ENCODE measurements at regions of chr19 and their contacts with region 1.

Region 1: GRCh38 chr19:15418588-15419412 is at the start of gene AKAP8L:
- DNase-seq: peak; percentile 94
- ATAC-seq: peak; percentile 92
- H3K4me3 Mint-ChIP-seq: peak within 1 kb of the TSS; percentile 99
- H3K27ac Mint-ChIP-seq: peak within 1 kb of the TSS; percentile 99
- H3K4me1 Mint-ChIP-seq: peaks cover 42% of the 10 kb centered on the region
- H3K27me3 Mint-ChIP-seq: no peaks in the 10 kb centered on the region
- CTCF ChIP-seq: no peak
- total RNA-seq, gene AKAP8L: 126 and 163 TPM in 2 replicates

Region 2: GRCh38 chr19:15125232-15126067 is 293.4 kb before region 1 on chr19:
- CTCF ChIA-PET with region 1: no interaction called
- POLR2A ChIA-PET with region 1: interaction called, 3 read pairs
- intact Hi-C with region 1: loop called (anchors 1 kb)
- DNase-seq: peak; percentile 96
- ATAC-seq: peak; percentile 88
- H3K4me3 Mint-ChIP-seq: peak overlapping the region; percentile 95
- H3K27ac Mint-ChIP-seq: peak overlapping the region; percentile 91
- H3K4me1 Mint-ChIP-seq: peaks cover 17% of the 10 kb centered on the region
- H3K27me3 Mint-ChIP-seq: peaks cover 4% of the 10 kb centered on the region
- CTCF ChIP-seq: no peak

Region 3: GRCh38 chr19:15264061-15264932 is 154.5 kb before region 1 on chr19:
- CTCF ChIA-PET with region 1: interaction called, 5 read pairs
- POLR2A ChIA-PET with region 1: interaction called, 3 read pairs
- intact Hi-C with region 1: loop called (anchors 1 kb)
- DNase-seq: peak; percentile 72
- ATAC-seq: peak; percentile 76
- H3K4me3 Mint-ChIP-seq: no peak overlapping the region
- H3K27ac Mint-ChIP-seq: no peak overlapping the region
- H3K4me1 Mint-ChIP-seq: peaks cover 9% of the 10 kb centered on the region
- H3K27me3 Mint-ChIP-seq: no peaks in the 10 kb centered on the region
- CTCF ChIP-seq: peak; percentile 36

Region 4: DNA sequence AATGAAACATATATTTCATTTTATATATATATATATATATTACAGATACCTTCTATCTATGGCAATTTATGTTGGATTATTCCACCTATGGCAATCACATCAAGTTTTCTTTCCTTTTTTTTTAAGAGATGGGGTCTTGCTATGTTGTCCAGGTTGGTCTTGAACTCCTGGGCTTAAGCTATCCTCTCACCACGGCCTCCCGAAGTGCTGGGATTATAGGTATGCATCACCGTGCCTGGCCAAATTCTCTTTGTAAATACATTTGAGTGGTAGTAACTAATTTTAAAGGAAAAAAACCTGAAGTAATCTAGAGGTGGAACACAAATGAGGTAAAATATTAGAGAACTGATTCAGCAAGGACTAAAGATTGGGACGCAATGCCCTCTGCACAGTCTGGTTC is 64.9 kb before region 1 on chr19:
- CTCF ChIA-PET with region 1: no interaction called
- POLR2A ChIA-PET with region 1: no interaction called
- intact Hi-C with region 1: no loop called
- DNase-seq: no peak
- ATAC-seq: no peak
- H3K4me3 Mint-ChIP-seq: no peak overlapping the region
- H3K27ac Mint-ChIP-seq: no peak overlapping the region
- H3K4me1 Mint-ChIP-seq: peaks cover 3% of the 10 kb centered on the region
- H3K27me3 Mint-ChIP-seq: no peaks in the 10 kb centered on the region
- CTCF ChIP-seq: no peak

Region 5: DNA sequence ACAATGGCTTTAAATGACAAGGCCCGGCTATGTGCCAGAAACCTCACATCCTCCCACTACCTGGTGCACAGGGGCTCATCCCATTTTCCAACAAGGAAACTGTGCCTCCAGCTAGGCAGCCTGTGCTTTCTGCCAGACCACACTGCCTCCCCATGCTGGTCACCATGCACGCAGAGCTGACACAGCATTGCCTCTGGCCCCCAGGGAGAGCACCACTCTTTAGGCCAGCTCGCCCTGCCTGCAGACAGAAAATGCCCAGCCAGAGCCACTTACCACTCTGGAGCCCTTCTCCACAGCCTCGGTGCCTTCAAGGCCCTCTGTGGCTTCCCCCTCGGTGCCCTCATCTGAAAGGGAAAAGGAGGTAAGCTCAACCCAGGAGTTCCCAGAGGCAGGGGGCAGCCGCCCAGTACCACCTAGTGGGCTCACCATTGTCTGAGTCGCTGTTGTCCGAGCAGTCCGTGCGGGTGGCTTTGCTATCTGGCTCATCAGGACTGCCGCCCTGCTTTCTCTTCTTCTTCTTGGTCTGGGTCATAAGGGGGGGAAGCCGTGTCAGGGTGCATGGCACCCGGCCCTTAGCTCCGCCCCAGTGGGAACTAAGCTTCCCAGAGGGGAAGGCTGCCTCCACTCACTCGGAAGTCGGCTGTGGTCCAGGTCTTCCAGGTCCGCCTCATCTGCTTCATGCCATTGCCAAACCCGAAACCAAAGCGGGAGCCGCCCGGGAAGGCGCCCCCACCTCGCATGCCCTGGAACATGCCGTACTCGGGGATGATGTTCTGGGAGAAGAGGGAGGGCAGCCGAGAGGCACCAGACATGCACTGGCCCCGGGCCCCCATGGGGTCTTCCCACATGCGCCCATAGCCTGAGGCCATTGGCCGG is 18.0 kb before region 1 on chr19:
- CTCF ChIA-PET with region 1: no interaction called
- POLR2A ChIA-PET with region 1: no interaction called
- intact Hi-C with region 1: no loop called
- DNase-seq: no peak
- ATAC-seq: no peak
- H3K4me3 Mint-ChIP-seq: no peak overlapping the region
- H3K27ac Mint-ChIP-seq: no peak overlapping the region
- H3K4me1 Mint-ChIP-seq: peaks cover 18% of the 10 kb centered on the region
- H3K27me3 Mint-ChIP-seq: no peaks in the 10 kb centered on the region
- CTCF ChIP-seq: no peak

Region 6: GRCh38 chr19:15432629-15433518 is 14.1 kb after region 1 on chr19:
- CTCF ChIA-PET with region 1: interaction called, 14 read pairs
- POLR2A ChIA-PET with region 1: interaction called, 53 read pairs
- intact Hi-C with region 1: loop called (anchors 1 kb)
- DNase-seq: peak; percentile 92
- ATAC-seq: peak; percentile 89
- H3K4me3 Mint-ChIP-seq: peak overlapping the region; percentile 97
- H3K27ac Mint-ChIP-seq: peak overlapping the region; percentile 93
- H3K4me1 Mint-ChIP-seq: peaks cover 31% of the 10 kb centered on the region
- H3K27me3 Mint-ChIP-seq: no peaks in the 10 kb centered on the region
- CTCF ChIP-seq: no peak

Region 7: DNA sequence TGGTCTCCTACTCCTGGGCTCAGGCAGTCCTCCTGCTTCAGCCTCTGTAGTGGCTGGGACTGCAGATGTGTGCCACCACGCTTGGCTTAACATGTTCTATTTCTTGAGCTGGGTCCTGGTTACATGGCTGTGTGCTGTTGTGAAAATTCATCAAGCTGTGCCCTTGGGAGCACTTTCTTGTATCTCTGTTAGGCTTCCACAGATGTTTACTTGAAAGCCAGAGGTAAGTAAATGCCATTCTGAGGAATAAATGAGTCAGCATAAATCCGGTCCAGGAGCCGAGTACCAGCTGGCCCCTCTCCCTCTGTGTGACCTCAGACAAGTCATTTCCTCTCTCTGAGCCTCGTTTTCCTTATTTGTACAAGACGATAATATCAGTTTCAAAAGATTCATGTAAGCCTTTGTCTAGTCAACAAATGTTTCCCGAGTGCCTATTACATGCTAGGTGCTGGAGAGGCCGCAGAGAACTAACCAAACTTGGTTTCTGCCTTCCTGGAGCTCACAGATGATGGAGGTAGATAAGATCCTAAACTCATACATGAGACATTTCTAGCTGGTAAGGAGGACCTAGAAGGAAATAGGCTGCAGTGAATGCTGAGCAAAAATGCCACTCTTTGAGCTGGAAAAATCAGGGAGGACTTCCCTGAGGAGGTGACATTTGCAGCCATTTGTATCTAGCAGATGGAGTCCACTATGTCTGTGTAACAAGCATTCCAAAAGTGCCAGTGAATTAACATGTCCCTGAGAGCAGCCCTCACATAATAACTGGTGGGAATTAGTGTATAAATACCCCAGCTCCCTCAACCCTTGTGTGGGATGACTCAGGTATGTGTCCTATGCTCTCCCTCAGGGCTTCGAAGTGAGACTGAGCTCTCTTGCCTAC is 48.3 kb after region 1 on chr19:
- CTCF ChIA-PET with region 1: interaction called, 5 read pairs
- POLR2A ChIA-PET with region 1: interaction called, 18 read pairs
- intact Hi-C with region 1: loop called (anchors 1 kb)
- DNase-seq: no peak
- ATAC-seq: no peak
- H3K4me3 Mint-ChIP-seq: peak overlapping the region; percentile 50
- H3K27ac Mint-ChIP-seq: peak overlapping the region; percentile 12
- H3K4me1 Mint-ChIP-seq: peaks cover 50% of the 10 kb centered on the region
- H3K27me3 Mint-ChIP-seq: peaks cover 15% of the 10 kb centered on the region
- CTCF ChIP-seq: no peak

Region 8: DNA sequence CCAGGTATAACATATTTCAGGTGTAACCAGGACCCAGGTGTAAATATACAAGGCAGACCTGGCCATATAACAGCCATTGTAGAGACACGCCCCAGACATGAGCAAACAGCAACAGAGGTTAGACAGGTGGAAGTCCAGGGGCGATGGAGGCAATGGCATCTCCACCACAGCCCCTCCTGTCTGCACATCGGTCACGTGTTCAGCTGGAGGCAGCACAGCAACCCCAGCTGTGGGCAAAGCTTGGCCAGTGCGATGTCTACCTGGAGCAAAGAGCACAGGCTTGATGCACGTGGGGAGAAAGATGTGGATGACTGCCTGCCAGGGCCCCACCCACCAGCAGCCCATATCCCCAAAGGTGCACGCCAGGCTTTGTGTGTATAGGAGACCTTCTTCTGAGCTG is 474.7 kb after region 1 on chr19:
- CTCF ChIA-PET with region 1: no interaction called
- POLR2A ChIA-PET with region 1: no interaction called
- intact Hi-C with region 1: no loop called
- DNase-seq: no peak
- ATAC-seq: no peak
- H3K4me3 Mint-ChIP-seq: no peak overlapping the region
- H3K27ac Mint-ChIP-seq: no peak overlapping the region
- H3K4me1 Mint-ChIP-seq: no peaks in the 10 kb centered on the region
- H3K27me3 Mint-ChIP-seq: peaks cover 19% of the 10 kb centered on the region
- CTCF ChIP-seq: no peak